ENCODE measurements at regions of chr1 and their contacts with region 1.

Region 1: DNA sequence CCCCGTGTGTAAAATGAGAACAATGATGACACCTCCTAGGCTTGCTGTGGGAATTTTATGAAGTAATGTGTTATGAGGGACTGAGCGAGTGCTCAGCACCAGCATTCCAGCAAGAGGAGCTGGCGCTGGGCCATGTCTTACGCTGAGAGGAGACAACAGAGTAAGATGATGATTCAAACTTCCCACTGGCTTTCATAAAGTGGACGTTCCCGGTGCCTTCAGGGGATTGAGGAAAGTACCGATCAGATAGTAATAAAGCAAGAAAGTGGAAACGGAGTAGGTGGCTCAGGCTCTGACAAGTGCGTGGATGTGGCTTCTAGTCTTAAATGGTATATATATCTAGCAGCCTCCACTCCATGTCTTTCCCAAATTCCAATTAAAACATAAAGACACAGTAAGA is 23.8 kb downstream of the EPHA10 start:
- DNase-seq: peak; percentile 55
- ATAC-seq: no peak

Region 2: GRCh38 chr1:37682334-37682987 is 58.7 kb before region 1 on chr1:
- intact Hi-C with region 1: no loop called
- DNase-seq: peak; percentile 88
- ATAC-seq: peak; percentile 67

Region 3: DNA sequence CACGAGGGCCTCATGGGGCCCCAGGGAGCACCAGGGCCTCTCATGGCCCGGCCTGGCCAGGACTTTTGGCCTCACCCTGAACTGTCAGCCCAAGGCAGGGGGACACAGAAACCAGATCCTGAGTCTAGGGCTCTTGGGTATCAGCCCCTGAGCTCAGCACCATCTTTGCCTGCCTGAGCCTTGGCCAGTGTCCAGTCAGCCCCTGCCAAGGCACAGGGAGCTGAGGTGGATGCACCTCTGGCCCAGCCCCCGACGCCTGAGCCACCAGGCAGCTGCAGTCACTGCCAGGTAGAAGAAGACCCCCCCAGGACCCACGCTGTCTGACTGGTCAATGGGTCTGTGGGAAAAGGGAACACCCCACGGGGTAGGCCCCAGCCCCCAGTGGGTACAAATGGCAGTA is 23.5 kb before region 1 on chr1:
- intact Hi-C with region 1: loop called (anchors 1 kb)
- DNase-seq: no peak
- ATAC-seq: no peak

Region 4: GRCh38 chr1:38029685-38030511 is 288.8 kb after region 1 on chr1:
- intact Hi-C with region 1: no loop called
- DNase-seq: no peak
- ATAC-seq: peak; percentile 31

Measured in sciatic nerve (tissue), 2 donors.